AG04450 (cell line): ENCODE measurements at regions of chr12 and their contacts with region 1.

Region 1: DNA sequence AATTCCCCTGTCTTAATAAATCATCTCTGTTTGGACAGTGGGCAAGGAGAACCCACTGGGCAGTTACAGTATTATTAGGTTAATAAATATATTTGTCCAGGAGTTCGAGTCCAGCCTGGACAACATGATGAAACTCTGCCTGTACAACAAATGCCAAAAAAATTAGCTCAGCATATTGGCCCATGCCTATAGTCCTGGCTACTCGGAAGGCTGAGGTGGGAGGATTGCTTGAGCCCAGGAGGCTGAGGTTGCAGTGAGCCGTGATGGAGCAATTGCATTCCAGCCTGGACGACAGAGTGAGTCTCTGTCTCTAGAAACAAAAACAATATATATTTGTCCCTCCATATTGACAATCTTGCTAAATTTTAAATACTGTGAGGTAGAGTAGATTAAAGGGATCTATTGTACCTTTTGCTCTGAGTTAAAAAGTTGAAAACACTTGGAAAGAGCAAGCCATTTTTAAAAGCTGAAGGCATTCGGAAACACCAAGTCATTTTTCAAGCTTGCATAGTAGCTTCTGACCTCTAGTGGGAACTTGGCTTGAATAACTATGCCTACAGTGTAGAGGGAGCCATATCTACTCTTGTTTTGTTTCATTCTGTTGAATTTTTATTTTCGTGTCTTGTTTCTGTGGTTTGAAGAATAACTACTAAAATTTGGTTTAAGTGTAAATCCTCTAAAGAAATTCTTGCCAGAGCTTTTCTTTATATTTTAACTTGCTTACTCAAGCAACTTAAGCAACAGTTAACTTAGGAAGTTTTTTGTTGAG is 14.6 kb upstream of the EEA1 start:
- DNase-seq: no peak
- H3K4me3 ChIP-seq: no peak overlapping the region
- H3K27ac ChIP-seq: no peak overlapping the region
- H3K27me3 ChIP-seq: no peaks in the 10 kb centered on the region
- CTCF ChIP-seq: no peak; the same call in 1 of the 2 replicates

Region 2: DNA sequence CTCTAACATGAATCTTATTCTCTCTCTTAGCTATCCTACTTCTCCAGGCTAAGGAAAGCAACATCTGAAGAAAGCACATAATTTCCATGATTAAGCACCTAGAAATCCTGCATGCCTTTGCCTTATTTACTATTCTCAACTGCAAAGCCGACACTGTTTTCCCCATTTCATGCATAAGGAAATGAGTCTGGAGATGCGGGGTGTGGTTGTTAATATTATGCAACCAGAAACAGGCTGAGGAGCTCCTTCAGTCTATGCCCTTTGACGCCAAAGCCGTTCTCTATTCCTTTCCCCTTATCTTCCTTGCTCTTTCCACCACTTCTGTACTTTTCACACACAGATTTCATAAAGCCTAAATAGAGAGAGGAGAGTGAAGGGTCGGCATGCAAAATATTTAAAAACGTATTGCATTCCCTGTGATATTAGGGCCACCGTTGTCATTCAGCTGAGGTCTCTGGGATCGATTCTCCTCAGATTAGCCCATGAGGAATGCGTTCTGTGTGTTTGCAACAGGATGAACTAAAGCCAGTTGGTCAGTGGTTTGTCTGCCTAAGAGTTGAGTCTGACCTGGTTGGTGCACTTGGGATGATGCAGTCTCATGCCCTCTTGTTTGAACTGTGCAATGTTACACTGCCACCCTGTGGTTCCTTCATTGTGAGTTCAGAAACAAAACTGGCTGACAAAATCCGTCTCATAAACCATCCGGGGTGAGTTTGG is 294.0 kb before region 1 on chr12:
- CTCF ChIA-PET with region 1: interaction called, 10 read pairs
- POLR2A ChIA-PET with region 1: no interaction called
- DNase-seq: peak; percentile 76
- H3K4me3 ChIP-seq: no peak overlapping the region
- H3K27ac ChIP-seq: no peak overlapping the region
- H3K27me3 ChIP-seq: peaks cover 2% of the 10 kb centered on the region
- CTCF ChIP-seq: peak; percentile 84

Region 3: DNA sequence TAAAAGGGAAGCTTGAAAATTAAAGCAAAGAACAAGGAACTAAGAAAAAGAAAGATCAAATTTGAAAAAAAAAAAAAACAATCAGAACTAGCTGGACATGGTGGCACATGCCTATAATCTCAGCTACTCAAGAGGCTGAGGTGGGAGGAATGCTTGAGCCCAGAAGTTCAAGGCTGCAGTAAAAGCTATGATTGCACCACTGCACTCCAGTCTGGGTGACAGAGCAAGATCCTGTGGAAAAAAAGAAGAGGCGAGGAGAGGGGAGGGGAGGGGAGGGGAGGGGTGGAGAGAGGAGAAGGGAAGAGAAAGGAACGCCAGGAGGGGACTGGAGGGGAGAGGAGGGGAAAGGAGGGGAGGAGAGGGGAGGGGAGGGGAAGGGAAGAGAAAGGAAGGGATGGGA is 57.5 kb before region 1 on chr12:
- CTCF ChIA-PET with region 1: no interaction called
- POLR2A ChIA-PET with region 1: no interaction called
- DNase-seq: no peak
- H3K4me3 ChIP-seq: no peak overlapping the region
- H3K27ac ChIP-seq: no peak overlapping the region
- H3K27me3 ChIP-seq: no peaks in the 10 kb centered on the region
- CTCF ChIP-seq: no peak

Region 4: GRCh38 chr12:92928962-92929915 is 14.4 kb before region 1 on chr12 and contains the start of gene EEA1:
- CTCF ChIA-PET with region 1: interaction called, 7 read pairs
- POLR2A ChIA-PET with region 1: interaction called, 16 read pairs
- DNase-seq: peak; percentile 80
- H3K4me3 ChIP-seq: peak within 1 kb of the TSS; percentile 82
- H3K27ac ChIP-seq: peak within 1 kb of the TSS; percentile 86
- H3K27me3 ChIP-seq: no peaks in the 10 kb centered on the region
- CTCF ChIP-seq: no peak
- polyA plus RNA-seq, gene EEA1: 14.0 and 18.4 TPM in 2 replicates

Region 5: GRCh38 chr12:92973601-92974000 is 29.9 kb after region 1 on chr12:
- CTCF ChIA-PET with region 1: no interaction called
- POLR2A ChIA-PET with region 1: interaction called, 12 read pairs
- DNase-seq: peak; percentile 64
- H3K4me3 ChIP-seq: no peak overlapping the region
- H3K27ac ChIP-seq: peak overlapping the region; percentile 48
- H3K27me3 ChIP-seq: no peaks in the 10 kb centered on the region
- CTCF ChIP-seq: no peak